ENCODE measurements at regions of chr1 and their contacts with region 1.

Region 1: DNA sequence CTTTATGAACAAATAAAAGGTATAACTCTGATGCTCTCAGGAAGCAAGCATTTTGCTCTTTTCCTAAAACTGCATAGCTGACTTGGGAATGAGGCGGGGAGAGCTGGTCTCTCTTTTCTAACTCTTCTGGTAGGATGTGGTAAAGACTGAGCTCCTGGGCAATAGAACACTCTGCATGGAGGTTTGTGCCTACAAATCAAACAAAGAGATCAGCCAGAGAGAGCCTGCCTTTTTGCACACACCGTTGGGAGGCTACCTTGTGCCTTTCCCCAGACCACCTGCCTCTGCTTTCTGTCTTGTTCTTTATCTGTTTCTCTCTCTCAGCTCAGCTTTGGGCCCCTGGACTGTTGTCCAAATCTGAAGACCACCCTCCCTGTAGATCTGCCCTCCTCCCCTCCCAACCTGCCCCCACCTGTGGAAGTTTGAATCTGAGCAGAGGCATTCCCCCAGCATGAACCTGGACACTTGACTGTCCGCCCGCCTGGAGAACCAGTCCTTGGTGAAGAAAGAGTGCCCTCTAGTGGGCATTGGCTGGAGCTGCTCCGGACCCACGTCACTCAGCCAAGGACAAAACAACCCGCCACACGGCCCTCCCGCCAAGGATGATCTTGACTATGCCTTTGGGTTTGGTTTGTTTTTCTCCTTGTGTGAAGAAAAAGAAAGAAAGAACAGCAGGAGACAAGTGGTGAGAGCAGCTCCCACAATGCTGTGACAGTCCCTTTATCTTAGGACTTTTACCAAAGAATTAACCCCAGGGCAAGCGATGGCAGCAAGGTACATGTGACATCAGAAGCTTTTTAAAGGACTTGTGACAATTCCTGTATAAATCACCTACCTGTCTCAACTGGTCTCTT is 228.2 kb downstream of the PBX1 start:
- DNase-seq: peak; percentile 91
- H3K4me3 Mint-ChIP-seq: no peak overlapping the region
- H3K27ac Mint-ChIP-seq: no peak overlapping the region
- H3K4me1 Mint-ChIP-seq: peaks cover 38% of the 10 kb centered on the region
- H3K27me3 Mint-ChIP-seq: no peaks in the 10 kb centered on the region
- CTCF ChIP-seq: peak; percentile 98

Region 2: GRCh38 chr1:163361123-163361934 is 1425.9 kb before region 1 on chr1:
- CTCF ChIA-PET with region 1: interaction called, 10 read pairs
- POLR2A ChIA-PET with region 1: no interaction called
- intact Hi-C with region 1: loop called (anchors 5 kb)
- DNase-seq: peak; percentile 58
- H3K4me3 Mint-ChIP-seq: no peak overlapping the region
- H3K27ac Mint-ChIP-seq: no peak overlapping the region
- H3K4me1 Mint-ChIP-seq: no peaks in the 10 kb centered on the region
- H3K27me3 Mint-ChIP-seq: no peaks in the 10 kb centered on the region
- CTCF ChIP-seq: peak; percentile 65

Region 3: GRCh38 chr1:163820766-163821165 is 966.4 kb before region 1 on chr1:
- CTCF ChIA-PET with region 1: interaction called, 18 read pairs
- POLR2A ChIA-PET with region 1: no interaction called
- intact Hi-C with region 1: loop called (anchors 1 kb)
- DNase-seq: peak; percentile 25
- H3K4me3 Mint-ChIP-seq: no peak overlapping the region
- H3K27ac Mint-ChIP-seq: no peak overlapping the region
- H3K4me1 Mint-ChIP-seq: peaks cover 8% of the 10 kb centered on the region
- H3K27me3 Mint-ChIP-seq: no peaks in the 10 kb centered on the region
- CTCF ChIP-seq: peak; percentile 41

Region 4: GRCh38 chr1:164558461-164559341 is 228.5 kb before region 1 on chr1 and contains the start of gene PBX1:
- CTCF ChIA-PET with region 1: interaction called, 19 read pairs
- POLR2A ChIA-PET with region 1: interaction called, 12 read pairs
- intact Hi-C with region 1: loop called (anchors 2 kb)
- DNase-seq: peak; percentile 100
- H3K4me3 Mint-ChIP-seq: peak within 1 kb of the TSS; percentile 89
- H3K27ac Mint-ChIP-seq: peak within 1 kb of the TSS; percentile 99
- H3K4me1 Mint-ChIP-seq: peaks cover 17% of the 10 kb centered on the region
- H3K27me3 Mint-ChIP-seq: no peaks in the 10 kb centered on the region
- CTCF ChIP-seq: no peak
- total RNA-seq, gene PBX1: 2.3 and 5.8 TPM in 2 replicates

Region 5: GRCh38 chr1:164625001-164625617 is 162.1 kb before region 1 on chr1:
- CTCF ChIA-PET with region 1: interaction called, 22 read pairs
- POLR2A ChIA-PET with region 1: no interaction called
- intact Hi-C with region 1: no loop called
- DNase-seq: no peak
- H3K4me3 Mint-ChIP-seq: no peak overlapping the region
- H3K27ac Mint-ChIP-seq: no peak overlapping the region
- H3K4me1 Mint-ChIP-seq: peaks cover 3% of the 10 kb centered on the region
- H3K27me3 Mint-ChIP-seq: no peaks in the 10 kb centered on the region
- CTCF ChIP-seq: peak; percentile 50

Region 6: DNA sequence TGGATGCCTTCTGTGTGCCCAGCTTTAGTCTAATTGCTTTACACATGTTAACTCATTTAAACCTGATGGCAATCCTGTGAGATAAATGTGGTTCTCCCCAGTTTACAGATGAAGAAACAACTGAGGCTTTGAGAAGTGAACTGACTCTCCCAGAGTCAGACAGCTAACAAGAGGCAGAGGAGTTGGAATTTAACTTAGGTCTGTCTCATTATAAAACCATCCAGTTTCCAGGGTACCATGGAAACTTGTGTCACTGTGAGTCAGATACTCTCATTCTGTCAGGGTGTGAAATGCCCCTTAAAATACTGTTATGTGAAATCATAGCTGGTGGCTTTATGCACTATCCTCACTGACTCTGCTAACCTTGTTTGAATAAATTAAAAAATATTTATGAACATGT is 21.6 kb before region 1 on chr1:
- CTCF ChIA-PET with region 1: interaction called, 83 read pairs
- POLR2A ChIA-PET with region 1: interaction called, 21 read pairs
- intact Hi-C with region 1: no loop called
- DNase-seq: peak; percentile 59
- H3K4me3 Mint-ChIP-seq: no peak overlapping the region
- H3K27ac Mint-ChIP-seq: peak overlapping the region; percentile 23
- H3K4me1 Mint-ChIP-seq: peaks cover 43% of the 10 kb centered on the region
- H3K27me3 Mint-ChIP-seq: no peaks in the 10 kb centered on the region
- CTCF ChIP-seq: no peak

Measured in MCF 10A (cell line).